Posterior vena cava (tissue), 2 donors: ENCODE measurements at regions of chr17 and their contacts with region 1.

Region 1: DNA sequence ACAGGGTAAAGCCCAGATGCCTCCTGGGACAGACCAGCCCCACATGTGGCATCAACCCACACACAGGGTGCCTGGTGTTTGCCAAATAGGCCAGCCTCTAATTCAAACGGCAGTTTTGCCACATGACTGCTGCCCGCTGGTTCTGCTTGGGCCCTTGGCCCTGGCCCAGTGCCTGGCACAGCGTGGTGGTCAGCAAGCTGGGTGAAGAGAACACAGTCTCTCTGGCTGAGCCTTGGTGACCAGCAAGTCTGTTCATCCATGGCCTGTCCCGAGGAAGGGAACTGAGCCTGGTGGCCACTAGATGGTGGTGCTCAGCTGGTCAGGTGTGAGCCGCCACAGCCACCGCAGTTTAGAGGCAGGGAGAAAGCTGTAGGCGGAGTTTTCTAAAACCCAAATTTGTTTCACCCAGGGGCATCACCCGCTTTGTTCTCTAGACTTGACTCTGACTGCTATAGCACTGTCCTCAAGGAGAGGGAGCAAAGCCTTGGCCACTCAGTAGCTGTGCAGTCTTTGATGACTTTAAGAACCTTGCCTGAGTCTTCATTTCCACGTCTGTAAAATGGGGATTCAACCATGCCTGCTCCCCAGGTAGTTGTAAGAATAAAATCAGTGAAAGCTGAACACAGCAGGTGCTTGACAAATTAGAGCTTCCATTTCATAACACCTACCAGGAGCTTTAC is 4.7 kb upstream of the GFAP start:
- DNase-seq: peak; percentile 92

Region 2: DNA sequence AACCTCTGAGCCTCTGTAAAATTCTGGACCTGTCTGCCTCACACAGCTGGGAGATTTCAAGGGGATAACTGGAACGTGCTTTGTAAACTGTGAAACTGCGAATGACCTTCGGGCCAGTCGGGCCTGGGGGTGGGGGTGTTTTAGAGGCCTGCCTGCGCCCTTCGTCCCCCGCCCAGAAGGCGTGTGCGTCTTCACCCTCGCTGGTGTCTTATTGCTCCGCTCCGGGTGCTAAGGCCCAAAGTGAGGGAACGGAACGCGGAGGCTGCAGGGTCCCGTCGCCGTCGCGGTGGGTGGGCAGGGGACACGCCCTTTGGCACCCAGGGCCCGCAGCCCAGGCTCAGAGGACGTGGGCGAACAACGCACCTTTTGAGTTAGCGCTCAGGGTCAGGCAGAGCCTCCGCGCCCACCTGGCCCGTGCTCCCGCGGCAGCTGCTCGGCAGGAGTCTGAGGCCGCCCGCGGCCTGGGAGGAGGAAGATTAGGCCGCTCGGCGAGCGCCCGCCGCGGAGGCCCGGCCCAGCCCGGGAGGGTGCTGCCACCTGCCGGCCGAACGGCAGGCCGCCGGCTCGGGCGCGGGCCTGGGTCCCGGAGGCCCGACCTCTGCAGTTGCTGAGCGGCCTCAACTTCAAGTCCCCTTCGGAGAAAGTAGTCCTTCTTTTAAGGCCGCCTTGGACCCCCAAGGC is 101.7 kb after region 1 on chr17:
- intact Hi-C with region 1: loop called (anchors 2 to 5 kb)
- DNase-seq: peak; percentile 91

Region 3: DNA sequence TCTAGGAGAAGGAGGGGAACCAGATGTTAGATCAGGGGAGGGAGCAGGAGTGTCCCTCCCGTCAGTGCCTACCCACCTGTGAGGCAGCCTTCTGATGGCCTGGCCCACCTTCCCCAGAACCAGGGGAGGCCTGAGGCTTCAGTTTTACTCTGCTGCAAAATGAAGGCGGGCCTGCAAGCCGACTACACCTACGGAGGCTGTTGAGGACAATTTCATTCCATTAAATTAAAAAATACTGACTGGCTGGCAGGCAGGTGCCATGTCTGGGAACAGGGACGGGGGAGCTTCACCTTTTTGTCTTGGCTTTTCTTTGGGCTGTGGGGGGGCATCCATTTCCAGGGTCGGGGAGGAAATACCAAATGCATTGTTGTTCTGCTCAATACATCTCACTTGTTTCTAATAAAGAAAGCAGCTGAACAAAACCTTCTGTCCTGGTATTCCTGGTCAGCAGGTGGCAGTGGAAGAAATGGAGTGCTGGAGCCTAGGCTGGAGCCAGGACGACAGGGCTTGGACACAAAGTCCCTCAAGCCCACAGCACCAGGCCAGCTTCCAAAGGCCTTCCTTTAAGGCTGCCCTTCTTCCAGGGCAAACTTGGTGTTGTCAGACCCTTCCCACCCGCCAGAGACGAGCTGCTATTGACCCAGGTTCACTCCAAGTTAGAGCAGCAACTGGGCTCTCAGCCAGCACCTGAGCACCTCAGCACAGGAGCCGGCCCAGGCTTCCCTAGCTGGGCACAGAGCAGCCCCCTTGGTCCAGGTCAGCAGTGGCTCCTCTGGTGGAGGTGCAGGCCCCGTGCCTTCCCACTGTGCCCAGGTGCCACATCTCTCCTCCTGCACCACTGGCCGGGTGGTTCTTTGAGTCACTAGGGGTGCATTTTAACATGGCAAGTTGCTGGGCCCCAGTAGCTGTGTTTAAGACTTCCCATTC is 188.8 kb after region 1 on chr17:
- intact Hi-C with region 1: loop called in 1 of 2 experiments (anchors 10 kb)
- DNase-seq: no peak

Region 4: GRCh38 chr17:45135192-45135977 is 215.4 kb after region 1 on chr17 and contains the start of gene ACBD4:
- intact Hi-C with region 1: loop called in 1 of 2 experiments (anchors 10 kb)
- DNase-seq: peak; percentile 99
- total RNA-seq, gene ACBD4: 10.8 to 12.9 TPM

Region 5: GRCh38 chr17:45197555-45198334 is 277.7 kb after region 1 on chr17:
- intact Hi-C with region 1: loop called in 1 of 2 experiments (anchors 5 kb)
- DNase-seq: peak; percentile 97